IMR-90 (cell line): ENCODE measurements at regions of chr20 and their contacts with region 1.

Region 1: DNA sequence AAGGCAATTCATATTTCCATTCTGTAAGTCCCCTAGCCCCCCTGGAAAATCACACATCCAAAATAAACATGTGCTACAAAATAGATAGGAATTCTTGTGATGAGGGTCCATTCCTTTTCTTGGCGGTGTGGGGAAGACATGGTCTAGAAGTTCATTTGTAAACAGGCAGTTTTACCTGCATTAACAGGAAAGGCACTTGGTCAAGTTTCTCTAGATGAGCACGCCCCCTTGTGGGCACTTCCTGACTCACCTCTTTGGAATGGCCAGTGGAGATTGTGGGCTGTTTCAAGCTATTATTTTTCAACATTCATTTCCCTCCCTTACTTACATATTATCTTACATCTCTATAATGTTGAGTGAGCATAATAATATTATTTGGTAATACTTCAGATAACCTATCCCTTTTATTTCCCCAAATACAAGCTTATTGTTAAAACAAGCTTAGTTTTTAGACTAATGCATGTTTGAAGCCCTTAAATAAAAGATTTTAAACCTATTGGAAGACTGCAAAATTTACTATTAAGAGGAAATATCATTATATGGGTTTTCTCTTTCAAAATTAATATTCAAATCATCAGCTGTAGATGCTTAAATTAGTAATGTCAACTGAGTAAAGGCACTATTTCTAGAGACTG is 92.1 kb downstream of the TASP1 start:
- DNase-seq: peak; percentile 71
- ATAC-seq: peak; percentile 80
- H3K4me3 ChIP-seq: no peak overlapping the region
- H3K27ac ChIP-seq: no peak overlapping the region
- H3K4me1 ChIP-seq: peaks cover 2% of the 10 kb centered on the region; the same call in 1 of the 2 replicates
- H3K27me3 ChIP-seq: no peaks in the 10 kb centered on the region
- CTCF ChIP-seq: peak; percentile 75
- POLR2A ChIP-seq: no peak
- RAD21 ChIP-seq: peak; percentile 81

Region 2: GRCh38 chr20:13119583-13119982 is 427.0 kb before region 1 on chr20:
- CTCF ChIA-PET with region 1: interaction called, 3 read pairs
- POLR2A ChIA-PET with region 1: no interaction called
- dilution Hi-C with region 1: no loop called
- in situ Hi-C with region 1: loop called (anchors 10 kb)
- intact Hi-C with region 1: loop called (anchors 1 kb)
- DNase-seq: peak; percentile 57
- ATAC-seq: peak; percentile 96
- H3K4me3 ChIP-seq: no peak overlapping the region
- H3K27ac ChIP-seq: no peak overlapping the region
- H3K4me1 ChIP-seq: no peaks in the 10 kb centered on the region
- H3K27me3 ChIP-seq: no peaks in the 10 kb centered on the region; the same call in 1 of the 2 replicates
- CTCF ChIP-seq: peak; percentile 87
- POLR2A ChIP-seq: no peak
- RAD21 ChIP-seq: peak; percentile 79

Region 3: GRCh38 chr20:13325033-13325432 is 221.6 kb before region 1 on chr20:
- CTCF ChIA-PET with region 1: interaction called, 28 read pairs
- POLR2A ChIA-PET with region 1: no interaction called
- dilution Hi-C with region 1: no loop called
- in situ Hi-C with region 1: loop called (anchors 10 kb)
- intact Hi-C with region 1: loop called (anchors 1 kb)
- DNase-seq: peak; percentile 16
- ATAC-seq: peak; percentile 80
- H3K4me3 ChIP-seq: no peak overlapping the region
- H3K27ac ChIP-seq: no peak overlapping the region
- H3K4me1 ChIP-seq: no peaks in the 10 kb centered on the region
- H3K27me3 ChIP-seq: peaks cover 10% of the 10 kb centered on the region
- CTCF ChIP-seq: peak; percentile 49
- POLR2A ChIP-seq: no peak
- RAD21 ChIP-seq: peak; percentile 58

Region 4: GRCh38 chr20:13458860-13459451 is 87.7 kb before region 1 on chr20:
- CTCF ChIA-PET with region 1: interaction called, 6 read pairs
- POLR2A ChIA-PET with region 1: no interaction called
- dilution Hi-C with region 1: no loop called
- in situ Hi-C with region 1: no loop called
- intact Hi-C with region 1: loop called (anchors 1 kb)
- DNase-seq: peak; percentile 41
- ATAC-seq: peak; percentile 53
- H3K4me3 ChIP-seq: no peak overlapping the region
- H3K27ac ChIP-seq: no peak overlapping the region
- H3K4me1 ChIP-seq: peaks cover 3% of the 10 kb centered on the region
- H3K27me3 ChIP-seq: no peaks in the 10 kb centered on the region
- CTCF ChIP-seq: peak; percentile 71
- POLR2A ChIP-seq: no peak
- RAD21 ChIP-seq: peak; percentile 76

Region 5: GRCh38 chr20:13771853-13772453 is 225.3 kb after region 1 on chr20:
- CTCF ChIA-PET with region 1: interaction called, 4 read pairs
- POLR2A ChIA-PET with region 1: no interaction called
- dilution Hi-C with region 1: no loop called
- in situ Hi-C with region 1: no loop called
- intact Hi-C with region 1: loop called (anchors 5 kb)
- DNase-seq: peak; percentile 27
- ATAC-seq: peak; percentile 48; the same call in 1 of the 2 replicates
- H3K4me3 ChIP-seq: no peak overlapping the region
- H3K27ac ChIP-seq: no peak overlapping the region
- H3K4me1 ChIP-seq: no peaks in the 10 kb centered on the region
- H3K27me3 ChIP-seq: no peaks in the 10 kb centered on the region
- CTCF ChIP-seq: peak; percentile 51
- POLR2A ChIP-seq: no peak
- RAD21 ChIP-seq: peak; percentile 26